OCI-LY7 (cell line): ENCODE measurements at regions of chr2 and their contacts with region 1.

Region 1: DNA sequence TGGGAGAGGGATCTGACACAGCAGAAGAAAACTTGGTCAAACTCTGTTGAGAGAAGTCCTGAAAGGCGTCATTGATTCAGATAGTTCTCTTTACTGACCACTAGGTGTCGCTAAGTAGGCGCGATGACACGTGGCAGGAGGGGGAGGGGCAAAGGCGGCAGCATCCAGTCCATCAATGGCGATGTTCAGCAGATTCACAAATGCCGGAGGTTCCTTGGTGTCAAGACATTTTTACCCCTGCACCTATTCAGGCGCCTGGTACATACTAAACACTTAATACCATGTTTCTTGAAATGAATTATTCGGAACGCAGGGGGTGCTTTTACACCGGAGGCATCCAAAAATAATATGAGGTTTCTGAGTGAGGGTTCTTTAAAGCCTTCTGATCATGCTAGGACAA is 3.0 kb upstream of the PLEK start:
- DNase-seq: peak; percentile 94
- H3K4me3 ChIP-seq: peak overlapping the region; percentile 49
- H3K27ac ChIP-seq: peak overlapping the region; percentile 72
- H3K4me1 ChIP-seq: peaks cover 57% of the 10 kb centered on the region
- CTCF ChIP-seq: peak; percentile 92

Region 2: DNA sequence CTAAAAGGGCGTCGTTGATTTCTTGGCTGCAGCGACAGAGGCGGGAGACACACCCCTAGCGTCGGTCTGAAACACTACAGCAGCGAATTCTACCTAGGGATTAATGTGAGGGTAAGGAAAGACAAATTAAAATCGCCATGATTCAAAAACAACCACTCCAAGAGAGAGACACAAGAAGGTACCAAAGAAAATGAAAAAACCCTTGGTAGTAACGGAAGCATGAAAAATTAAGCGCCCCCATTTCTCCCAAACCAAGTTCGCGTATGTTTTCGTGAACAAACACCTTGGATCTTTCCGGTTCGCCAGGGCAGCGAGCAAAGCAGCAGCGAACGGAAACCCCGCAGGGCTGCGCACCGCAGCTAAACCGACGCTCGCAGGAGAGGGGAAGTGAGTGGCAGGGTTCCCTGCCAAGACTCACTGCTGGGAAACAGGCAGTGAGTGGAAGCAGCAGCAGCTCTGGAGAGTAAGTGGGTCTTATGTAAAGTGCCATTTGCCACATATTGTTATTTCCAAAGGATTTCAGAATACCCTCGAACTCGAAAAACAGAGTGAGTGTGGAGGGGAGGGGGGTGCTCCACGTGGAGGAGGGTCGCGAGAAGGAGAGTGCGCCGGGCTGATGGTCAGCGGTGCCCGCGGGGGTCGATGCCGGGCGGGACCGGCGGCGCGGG is 110.7 kb before region 1 on chr2:
- CTCF ChIA-PET with region 1: no interaction called
- POLR2A ChIA-PET with region 1: no interaction called
- intact Hi-C with region 1: loop called (anchors 5 kb)
- DNase-seq: peak; percentile 92
- H3K4me3 ChIP-seq: peak overlapping the region; percentile 89
- H3K27ac ChIP-seq: peak overlapping the region; percentile 89
- H3K4me1 ChIP-seq: peaks cover 63% of the 10 kb centered on the region
- CTCF ChIP-seq: peak; percentile 88

Region 3: DNA sequence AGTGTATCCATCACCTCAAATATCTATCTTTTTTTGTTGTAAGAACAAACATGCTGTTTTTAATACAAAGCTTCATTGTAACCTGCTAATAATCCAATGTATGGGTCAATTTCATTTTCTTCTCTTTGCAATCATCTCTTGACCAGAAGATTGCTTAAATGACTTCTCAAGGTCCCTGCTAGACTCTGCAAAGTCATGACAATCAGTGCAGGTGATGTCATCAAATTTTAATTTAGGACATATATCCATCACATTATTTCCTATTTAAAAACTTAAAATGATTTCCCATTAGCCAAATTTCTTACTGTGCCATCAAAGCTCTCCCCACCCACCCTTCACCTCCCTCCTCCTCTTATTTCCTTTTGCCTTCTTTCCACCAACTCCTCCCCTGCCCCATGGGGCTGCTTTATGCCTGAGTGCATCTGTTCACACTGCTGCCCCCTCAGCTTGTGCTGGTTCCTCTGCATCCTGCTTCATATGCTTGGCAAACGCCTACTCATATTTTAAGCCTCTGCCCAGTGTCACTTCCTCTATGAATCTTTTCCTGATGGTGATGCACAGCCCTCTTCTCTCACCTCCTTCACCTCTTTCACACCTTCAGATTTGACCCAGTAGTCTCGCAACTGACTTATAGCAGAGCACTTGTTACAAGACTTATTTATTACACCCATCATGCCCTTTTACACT is 23.3 kb after region 1 on chr2:
- CTCF ChIA-PET with region 1: interaction called, 3 read pairs
- POLR2A ChIA-PET with region 1: interaction called, 8 read pairs
- intact Hi-C with region 1: loop called (anchors 1 kb)
- DNase-seq: peak; percentile 89
- H3K4me3 ChIP-seq: peak overlapping the region; percentile 35
- H3K27ac ChIP-seq: peak overlapping the region; percentile 87
- H3K4me1 ChIP-seq: peaks cover 71% of the 10 kb centered on the region
- CTCF ChIP-seq: peak; percentile 47

Region 4: GRCh38 chr2:68418855-68419254 is 56.8 kb after region 1 on chr2:
- CTCF ChIA-PET with region 1: interaction called, 4 read pairs
- POLR2A ChIA-PET with region 1: interaction called, 17 read pairs
- intact Hi-C with region 1: no loop called
- DNase-seq: peak; percentile 71
- H3K4me3 ChIP-seq: peak overlapping the region; percentile 1
- H3K27ac ChIP-seq: peak overlapping the region; percentile 38
- H3K4me1 ChIP-seq: peaks cover 67% of the 10 kb centered on the region
- CTCF ChIP-seq: peak; percentile 49

Region 5: DNA sequence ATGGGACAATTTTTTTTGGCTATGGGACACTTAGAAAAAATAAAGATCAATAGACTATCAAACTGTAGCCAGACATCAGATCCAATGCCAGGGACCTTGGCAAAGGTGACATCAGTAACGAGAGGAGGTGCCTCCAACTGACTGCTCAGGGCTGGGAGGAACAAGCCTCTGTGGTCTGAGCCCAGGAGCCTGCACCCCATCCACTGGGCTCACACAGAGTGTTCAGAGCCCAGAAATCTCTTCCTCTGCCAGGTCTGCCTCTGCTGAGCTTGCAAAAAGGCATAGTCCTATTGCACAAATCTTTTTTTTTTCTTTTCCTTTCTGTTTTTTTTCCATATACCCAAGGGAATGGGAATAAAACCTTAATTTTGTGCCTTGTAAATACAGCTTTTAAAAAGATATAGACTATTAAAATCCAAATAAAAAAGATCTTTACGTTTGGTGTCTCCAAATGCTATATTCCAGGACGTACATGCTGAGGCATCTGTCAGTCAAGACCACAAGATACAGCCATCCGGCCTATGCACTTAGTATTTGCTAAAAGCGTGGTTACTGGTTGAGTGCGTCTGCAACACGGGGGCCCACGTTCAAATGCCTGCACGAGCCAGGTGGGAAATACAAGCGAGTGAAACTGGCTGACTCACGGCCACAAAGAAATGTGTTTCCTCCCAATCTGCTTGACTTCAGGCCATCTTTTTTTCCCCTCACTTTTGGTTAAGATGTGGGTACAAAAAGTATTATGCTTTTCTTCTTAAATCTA is 364.7 kb after region 1 on chr2:
- CTCF ChIA-PET with region 1: no interaction called
- POLR2A ChIA-PET with region 1: no interaction called
- intact Hi-C with region 1: loop called (anchors 10 kb)
- DNase-seq: peak; percentile 94
- H3K4me3 ChIP-seq: peak overlapping the region; percentile 39
- H3K27ac ChIP-seq: peak overlapping the region; percentile 66
- H3K4me1 ChIP-seq: peaks cover 68% of the 10 kb centered on the region
- CTCF ChIP-seq: no peak